ENCODE measurements at regions of chr17 and their contacts with region 1.

Region 1: GRCh38 chr17:82804442-82805191 is 35.2 kb downstream of the ZNF750 start:
- DNase-seq: no peak
- H3K4me3 ChIP-seq: no peak overlapping the region
- H3K27ac ChIP-seq: no peak overlapping the region
- H3K4me1 ChIP-seq: no peaks in the 10 kb centered on the region; a peak in 1 of 7 replicates
- H3K27me3 ChIP-seq: no peaks in the 10 kb centered on the region
- CTCF ChIP-seq: no peak
- EP300 ChIP-seq: no peak
- POLR2A ChIP-seq: no peak
- RAD21 ChIP-seq: no peak

Region 2: GRCh38 chr17:82772026-82772425 is 32.6 kb before region 1 on chr17:
- CTCF ChIA-PET with region 1: no interaction called
- POLR2A ChIA-PET with region 1: no interaction called
- DNase-seq: no peak
- H3K4me3 ChIP-seq: no peak overlapping the region
- H3K27ac ChIP-seq: no peak overlapping the region
- H3K4me1 ChIP-seq: no peaks in the 10 kb centered on the region
- H3K27me3 ChIP-seq: no peaks in the 10 kb centered on the region
- CTCF ChIP-seq: no peak
- EP300 ChIP-seq: no peak
- POLR2A ChIP-seq: no peak
- RAD21 ChIP-seq: no peak

Region 3: DNA sequence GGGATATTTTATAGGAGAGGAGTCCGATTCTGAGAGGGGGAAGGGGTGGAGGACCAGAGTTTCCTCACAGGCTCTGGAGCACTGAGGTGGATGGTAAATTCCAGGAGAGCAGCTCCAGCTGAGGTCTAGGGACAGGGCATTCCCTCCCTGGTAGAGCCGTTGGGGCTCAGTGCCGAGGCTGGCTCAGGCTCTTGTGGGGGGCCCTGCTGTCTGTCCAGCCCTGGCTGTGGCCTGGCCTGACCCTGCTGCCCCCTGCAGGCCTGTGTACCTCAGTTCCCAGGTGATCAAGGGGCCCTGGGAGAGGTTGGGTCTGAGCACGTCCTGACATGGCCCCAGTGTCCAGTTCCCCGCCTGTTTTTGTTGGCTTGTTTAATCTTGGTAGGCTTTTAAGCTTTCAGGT is 18.4 kb after region 1 on chr17:
- CTCF ChIA-PET with region 1: interaction called, 17 read pairs
- POLR2A ChIA-PET with region 1: no interaction called
- DNase-seq: peak in 1 of 2 experiments; percentile 68
- H3K4me3 ChIP-seq: no peak overlapping the region
- H3K27ac ChIP-seq: no peak overlapping the region
- H3K4me1 ChIP-seq: peaks cover 0 to 2% (median 0%) of the 10 kb centered on the region in 4 experiments; a peak in 2 of 7 replicates
- H3K27me3 ChIP-seq: no peaks in the 10 kb centered on the region
- CTCF ChIP-seq: peak; percentile 53 to 67 (median 60)
- EP300 ChIP-seq: no peak
- POLR2A ChIP-seq: no peak
- RAD21 ChIP-seq: peak; percentile 13 to 48; a peak in 2 of 4 replicates

Region 4: DNA sequence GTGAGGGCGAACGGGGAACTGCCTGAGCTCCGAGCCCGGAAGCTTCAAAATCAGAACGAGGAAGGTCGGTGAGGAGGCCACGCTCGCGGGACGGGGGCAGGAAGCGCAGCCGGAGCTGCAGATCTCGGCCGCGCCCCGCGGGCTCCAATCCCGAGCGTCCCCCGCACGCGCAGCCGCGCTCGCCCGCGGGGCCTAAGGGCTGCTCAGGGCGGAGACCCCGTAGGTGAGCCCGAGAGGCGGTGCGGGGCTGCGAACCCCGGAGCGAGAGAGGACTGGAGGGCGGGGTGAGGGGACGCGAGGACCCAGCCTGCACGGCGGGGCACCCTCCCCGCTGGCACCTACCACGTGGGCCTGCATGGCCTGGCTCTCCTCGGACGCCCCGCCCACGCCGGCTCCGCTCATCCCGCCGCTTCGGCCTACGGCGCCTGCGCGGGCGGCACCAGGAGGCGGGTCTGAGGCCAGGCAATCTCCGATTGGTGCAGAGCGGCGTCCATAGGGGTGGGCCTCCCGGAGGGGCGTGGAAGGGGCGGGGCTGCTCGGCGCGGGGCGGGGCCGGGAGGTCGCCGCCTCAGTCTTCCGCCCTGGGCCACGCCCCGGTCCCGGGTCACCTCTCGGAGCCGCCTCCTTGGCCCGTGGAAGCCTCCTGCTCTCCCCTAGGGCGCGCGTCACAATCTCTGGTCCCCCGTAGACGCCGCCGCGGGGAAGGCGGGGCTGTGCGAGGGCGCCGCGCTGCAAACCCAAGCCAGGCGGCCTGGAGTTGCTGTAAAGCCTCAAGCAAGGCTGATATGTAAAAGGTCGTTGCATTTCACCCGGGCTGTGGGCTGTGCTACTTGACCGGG is 247.0 kb after region 1 on chr17:
- CTCF ChIA-PET with region 1: no interaction called
- POLR2A ChIA-PET with region 1: no interaction called
- DNase-seq: peak; percentile 93 to 94
- H3K4me3 ChIP-seq: peak overlapping the region; percentile 57 to 80 (median 70)
- H3K27ac ChIP-seq: peak overlapping the region; percentile 40; the same call in 1 of the 2 replicates
- H3K4me1 ChIP-seq: peaks cover 0 to 14% (median 7%) of the 10 kb centered on the region in 4 experiments; a peak in 6 of 7 replicates
- H3K27me3 ChIP-seq: peaks cover 0 to 5% (median 0%) of the 10 kb centered on the region in 4 experiments; a peak in 1 of 7 replicates
- CTCF ChIP-seq: no peak; a peak in 1 of 4 replicates
- EP300 ChIP-seq: no peak
- POLR2A ChIP-seq: peak in 1 of 2 experiments; percentile 40; a peak in 1 of 3 replicates
- RAD21 ChIP-seq: no peak